ENCODE measurements at regions of chr16 and their contacts with region 1.

Region 1: GRCh38 chr16:81314603-81315270 is at the start of gene GAN:
- DNase-seq: peak; percentile 85 to 97 (median 91)
- ATAC-seq: peak; percentile 96
- H3K4me3 ChIP-seq: peak within 1 kb of the TSS; percentile 78
- H3K4me3 Mint-ChIP-seq: peak within 1 kb of the TSS; percentile 95
- H3K27ac ChIP-seq: peak within 1 kb of the TSS in 1 of 2 donors; percentile 41
- H3K27ac Mint-ChIP-seq: peak within 1 kb of the TSS; percentile 89
- H3K4me1 ChIP-seq: peaks cover 27% of the 10 kb centered on the region
- H3K4me1 Mint-ChIP-seq: peaks cover 62% of the 10 kb centered on the region
- H3K27me3 ChIP-seq: no peaks in the 10 kb centered on the region
- H3K27me3 Mint-ChIP-seq: no peaks in the 10 kb centered on the region
- CTCF ChIP-seq: no peak
- total RNA-seq, gene GAN: 4.5 to 4.7 TPM

Region 2: GRCh38 chr16:81077076-81077940 is 237.4 kb before region 1 on chr16 and contains the start of gene C16orf46:
- CTCF ChIA-PET with region 1: no interaction called
- POLR2A ChIA-PET with region 1: interaction called, 8 read pairs
- intact Hi-C with region 1: loop called in 1 of 2 experiments (anchors 5 kb)
- DNase-seq: peak; percentile 93 to 99 (median 96)
- ATAC-seq: peak; percentile 68
- H3K4me3 ChIP-seq: peak within 1 kb of the TSS; percentile 90
- H3K4me3 Mint-ChIP-seq: no peak within 1 kb of the TSS
- H3K27ac ChIP-seq: peak within 1 kb of the TSS; percentile 95 to 97
- H3K27ac Mint-ChIP-seq: no peak within 1 kb of the TSS
- H3K4me1 ChIP-seq: peaks cover 15% of the 10 kb centered on the region
- H3K4me1 Mint-ChIP-seq: no peaks in the 10 kb centered on the region
- H3K27me3 ChIP-seq: no peaks in the 10 kb centered on the region
- H3K27me3 Mint-ChIP-seq: no peaks in the 10 kb centered on the region
- CTCF ChIP-seq: no peak
- total RNA-seq, gene C16orf46: 0.55 TPM in 1 of 2 experiments, not detected in the other

Region 3: GRCh38 chr16:81095953-81096717 is 218.6 kb before region 1 on chr16 and contains the start of gene GCSH:
- CTCF ChIA-PET with region 1: no interaction called
- POLR2A ChIA-PET with region 1: no interaction called
- intact Hi-C with region 1: loop called in 1 of 2 experiments (anchors 2 kb)
- DNase-seq: peak; percentile 95 to 100 (median 98)
- ATAC-seq: peak; percentile 96
- H3K4me3 ChIP-seq: peak within 1 kb of the TSS; percentile 74
- H3K4me3 Mint-ChIP-seq: peak within 1 kb of the TSS; percentile 96
- H3K27ac ChIP-seq: peak within 1 kb of the TSS in 1 of 2 donors; percentile 16
- H3K27ac Mint-ChIP-seq: peak within 1 kb of the TSS; percentile 77
- H3K4me1 ChIP-seq: peaks cover 17% of the 10 kb centered on the region
- H3K4me1 Mint-ChIP-seq: peaks cover 17% of the 10 kb centered on the region
- H3K27me3 ChIP-seq: no peaks in the 10 kb centered on the region
- H3K27me3 Mint-ChIP-seq: no peaks in the 10 kb centered on the region
- CTCF ChIP-seq: no peak
- total RNA-seq, gene GCSH: 2.3 to 3.2 TPM

Region 4: DNA sequence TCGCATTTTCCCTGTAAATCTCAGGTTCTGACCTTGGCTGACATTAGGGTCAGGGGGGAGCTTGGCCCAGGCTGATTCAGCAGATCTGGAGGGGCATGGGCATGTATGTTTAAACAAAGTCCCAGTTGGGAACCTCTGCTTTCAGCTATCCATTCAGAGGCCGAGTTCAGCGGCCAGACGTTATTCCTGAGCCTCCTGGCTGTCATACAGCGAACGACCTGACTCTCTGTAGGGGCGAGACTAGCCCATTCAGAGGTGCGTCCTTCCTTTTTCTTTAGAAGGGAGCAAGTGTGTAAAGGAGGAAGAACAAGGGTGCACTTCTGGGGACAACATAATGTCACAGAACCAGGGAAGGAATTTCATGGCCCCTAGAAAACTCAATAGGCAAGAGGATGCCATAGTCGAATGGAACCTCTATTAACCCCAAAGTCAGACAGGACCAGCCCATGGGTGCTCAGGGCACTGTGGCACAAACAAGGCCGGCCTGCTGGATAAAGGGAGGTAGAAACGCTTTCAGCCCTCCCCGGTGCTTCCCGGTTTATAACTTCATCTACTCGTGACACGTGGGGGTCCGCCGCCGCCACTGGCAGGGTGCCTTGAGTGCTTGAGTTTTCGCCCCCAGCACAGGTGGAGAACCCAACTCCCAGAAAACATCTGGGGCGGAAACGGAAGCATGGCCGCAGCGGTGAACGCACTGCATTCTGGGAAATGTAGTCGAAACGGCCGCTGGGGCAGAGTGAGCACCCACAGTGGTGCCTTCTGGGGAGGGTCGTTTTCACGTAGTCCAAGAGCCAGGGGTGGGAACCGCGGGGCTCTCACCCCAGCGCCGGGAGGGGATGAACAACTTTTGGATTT is 431.2 kb after region 1 on chr16:
- CTCF ChIA-PET with region 1: no interaction called
- POLR2A ChIA-PET with region 1: interaction called, 3 read pairs
- intact Hi-C with region 1: loop called in 1 of 2 experiments (anchors 2 kb)
- DNase-seq: peak; percentile 54 to 85 (median 70)
- ATAC-seq: peak; percentile 97
- H3K4me3 ChIP-seq: peak overlapping the region; percentile 57
- H3K4me3 Mint-ChIP-seq: peak overlapping the region; percentile 84
- H3K27ac ChIP-seq: no peak overlapping the region
- H3K27ac Mint-ChIP-seq: peak overlapping the region; percentile 53
- H3K4me1 ChIP-seq: peaks cover 14% of the 10 kb centered on the region
- H3K4me1 Mint-ChIP-seq: peaks cover 10% of the 10 kb centered on the region
- H3K27me3 ChIP-seq: no peaks in the 10 kb centered on the region
- H3K27me3 Mint-ChIP-seq: no peaks in the 10 kb centered on the region
- CTCF ChIP-seq: no peak

Region 5: GRCh38 chr16:82016263-82016662 is 701.5 kb after region 1 on chr16:
- CTCF ChIA-PET with region 1: no interaction called
- POLR2A ChIA-PET with region 1: no interaction called
- intact Hi-C with region 1: loop called in 1 of 2 experiments (anchors 5 kb)
- DNase-seq: no peak
- ATAC-seq: no peak
- H3K4me3 ChIP-seq: no peak overlapping the region
- H3K4me3 Mint-ChIP-seq: no peak overlapping the region
- H3K27ac ChIP-seq: no peak overlapping the region
- H3K27ac Mint-ChIP-seq: no peak overlapping the region
- H3K4me1 ChIP-seq: peaks cover 8% of the 10 kb centered on the region
- H3K4me1 Mint-ChIP-seq: peaks cover 10% of the 10 kb centered on the region
- H3K27me3 ChIP-seq: peaks cover 3 to 36% of the 10 kb centered on the region in 2 experiments
- H3K27me3 Mint-ChIP-seq: peaks cover 61% of the 10 kb centered on the region
- CTCF ChIP-seq: no peak

Measured in CD4-positive, alpha-beta T cell (primary cell).